ENCODE measurements at regions of chr17 and their contacts with region 1.

Region 1: GRCh38 chr17:17496189-17497064 is at the start of gene RASD1:
- DNase-seq: peak; percentile 86
- H3K4me3 Mint-ChIP-seq: peak within 1 kb of the TSS; percentile 68
- H3K27ac Mint-ChIP-seq: peak within 1 kb of the TSS; percentile 28
- H3K4me1 Mint-ChIP-seq: peaks cover 18% of the 10 kb centered on the region
- H3K27me3 Mint-ChIP-seq: peaks cover 56% of the 10 kb centered on the region

Region 2: DNA sequence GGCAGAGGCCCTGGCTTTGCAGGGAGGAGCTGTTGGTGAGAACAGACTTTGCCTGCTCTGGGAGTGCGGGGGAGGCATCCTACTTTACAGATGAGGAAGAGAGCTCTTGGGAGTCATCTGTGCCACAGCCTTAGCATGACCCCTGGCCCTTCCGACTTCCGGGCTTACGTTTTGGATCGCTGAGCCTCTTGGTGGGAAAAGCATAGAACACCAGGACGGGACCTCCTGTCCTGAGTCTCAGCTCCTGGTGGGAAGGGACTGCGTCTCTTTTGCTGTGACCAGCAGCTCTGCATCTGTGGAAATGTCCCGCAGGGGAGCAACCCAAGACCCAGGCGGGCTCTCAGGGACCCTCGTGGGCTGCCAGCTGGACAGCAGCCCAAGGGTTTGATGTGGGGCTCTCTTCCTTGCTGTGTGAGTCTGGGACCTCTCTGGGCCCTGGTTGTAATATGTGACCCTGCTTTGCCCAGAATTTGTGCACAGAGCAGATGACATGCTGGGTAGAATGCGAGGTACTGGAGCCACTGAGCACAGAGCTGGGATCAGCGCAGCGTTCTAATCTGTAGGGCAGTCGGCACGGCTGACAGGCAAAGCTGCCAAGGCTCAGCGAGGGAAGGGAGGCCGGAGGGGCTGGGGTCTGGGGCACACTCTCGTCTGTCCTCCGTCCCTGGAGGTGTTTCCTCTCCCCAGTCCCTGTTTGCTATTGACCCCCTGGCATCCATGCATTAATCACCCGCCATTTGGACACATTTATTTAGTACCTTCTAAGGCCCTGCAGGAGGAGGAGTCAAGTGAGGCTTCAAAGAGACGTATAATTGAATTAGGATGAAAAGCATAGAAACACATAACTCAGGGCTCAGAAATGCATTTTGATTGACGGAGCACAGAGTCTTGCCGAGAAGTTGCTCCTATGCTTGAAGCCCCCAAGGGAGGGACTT is 129.2 kb before region 1 on chr17:
- CTCF ChIA-PET with region 1: no interaction called
- DNase-seq: no peak
- H3K4me3 Mint-ChIP-seq: no peak overlapping the region
- H3K27ac Mint-ChIP-seq: no peak overlapping the region
- H3K4me1 Mint-ChIP-seq: no peaks in the 10 kb centered on the region
- H3K27me3 Mint-ChIP-seq: peaks cover 61% of the 10 kb centered on the region

Region 3: DNA sequence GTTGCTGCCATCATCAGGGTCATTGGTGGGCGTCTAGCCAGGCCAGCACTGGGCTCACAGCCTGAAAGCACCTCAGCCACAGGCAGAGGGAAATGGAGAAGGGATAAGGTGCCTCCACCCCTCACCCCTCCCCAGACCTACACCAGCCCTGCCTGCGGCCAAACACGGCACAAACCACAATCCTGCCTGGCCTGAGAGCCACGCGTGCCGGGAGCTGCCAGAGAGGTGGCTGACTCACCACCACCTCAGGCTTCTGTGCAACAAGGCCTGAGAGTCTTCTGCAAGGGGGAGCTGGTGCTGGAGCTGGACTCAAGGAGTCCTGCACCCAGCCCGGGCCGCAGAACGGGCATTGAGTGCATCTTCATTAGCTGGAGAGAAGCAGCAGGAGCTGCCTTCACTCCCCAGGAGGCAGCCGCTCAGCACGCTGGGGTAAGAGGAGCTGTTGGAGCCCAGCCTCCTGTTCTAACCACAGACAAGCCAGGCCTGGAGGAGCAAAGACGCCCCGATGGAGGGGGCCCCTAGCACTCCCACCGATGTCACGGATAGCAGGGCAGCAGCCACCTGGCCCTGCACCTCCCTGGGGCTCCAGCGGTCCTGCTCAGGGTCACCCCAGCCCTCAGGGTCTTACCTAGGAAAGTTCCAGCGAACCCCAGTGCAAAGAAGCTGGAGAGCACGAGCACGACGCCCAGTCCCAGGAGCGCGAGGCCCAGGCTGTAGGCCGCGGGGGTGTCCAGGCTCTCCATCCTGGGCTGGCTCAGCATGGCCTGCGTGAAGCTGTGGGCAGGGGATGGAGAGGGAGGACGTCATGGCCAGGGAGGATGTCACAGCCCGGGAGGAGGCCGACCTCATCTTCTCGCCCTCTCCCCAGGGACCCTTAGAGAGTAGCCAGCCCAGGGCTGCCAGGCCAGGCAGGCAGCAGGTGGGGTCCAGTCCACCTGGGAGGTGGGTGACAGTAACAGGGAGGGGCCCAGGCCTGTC is 15.7 kb after region 1 on chr17:
- CTCF ChIA-PET with region 1: interaction called, 12 read pairs
- DNase-seq: no peak
- H3K4me3 Mint-ChIP-seq: no peak overlapping the region
- H3K27ac Mint-ChIP-seq: no peak overlapping the region
- H3K4me1 Mint-ChIP-seq: no peaks in the 10 kb centered on the region
- H3K27me3 Mint-ChIP-seq: no peaks in the 10 kb centered on the region

Region 4: GRCh38 chr17:17568749-17569195 is 72.3 kb after region 1 on chr17:
- CTCF ChIA-PET with region 1: interaction called, 17 read pairs
- DNase-seq: peak; percentile 78
- H3K4me3 Mint-ChIP-seq: no peak overlapping the region
- H3K27ac Mint-ChIP-seq: no peak overlapping the region
- H3K4me1 Mint-ChIP-seq: no peaks in the 10 kb centered on the region
- H3K27me3 Mint-ChIP-seq: no peaks in the 10 kb centered on the region

Region 5: GRCh38 chr17:17641621-17642409 is 145.4 kb after region 1 on chr17:
- CTCF ChIA-PET with region 1: interaction called, 33 read pairs
- DNase-seq: peak; percentile 86
- H3K4me3 Mint-ChIP-seq: no peak overlapping the region
- H3K27ac Mint-ChIP-seq: no peak overlapping the region
- H3K4me1 Mint-ChIP-seq: peaks cover 2% of the 10 kb centered on the region
- H3K27me3 Mint-ChIP-seq: peaks cover 42% of the 10 kb centered on the region

Measured in activated naive CD4-positive, alpha-beta T cell treated with anti-CD3 and anti-CD28 coated beads, Interleukin-2, amount 10 ng/mL, durations not matched to agents 7 days and 5 days (primary cell).